ENCODE measurements at regions of chr9 and their contacts with region 1.

Region 1: DNA sequence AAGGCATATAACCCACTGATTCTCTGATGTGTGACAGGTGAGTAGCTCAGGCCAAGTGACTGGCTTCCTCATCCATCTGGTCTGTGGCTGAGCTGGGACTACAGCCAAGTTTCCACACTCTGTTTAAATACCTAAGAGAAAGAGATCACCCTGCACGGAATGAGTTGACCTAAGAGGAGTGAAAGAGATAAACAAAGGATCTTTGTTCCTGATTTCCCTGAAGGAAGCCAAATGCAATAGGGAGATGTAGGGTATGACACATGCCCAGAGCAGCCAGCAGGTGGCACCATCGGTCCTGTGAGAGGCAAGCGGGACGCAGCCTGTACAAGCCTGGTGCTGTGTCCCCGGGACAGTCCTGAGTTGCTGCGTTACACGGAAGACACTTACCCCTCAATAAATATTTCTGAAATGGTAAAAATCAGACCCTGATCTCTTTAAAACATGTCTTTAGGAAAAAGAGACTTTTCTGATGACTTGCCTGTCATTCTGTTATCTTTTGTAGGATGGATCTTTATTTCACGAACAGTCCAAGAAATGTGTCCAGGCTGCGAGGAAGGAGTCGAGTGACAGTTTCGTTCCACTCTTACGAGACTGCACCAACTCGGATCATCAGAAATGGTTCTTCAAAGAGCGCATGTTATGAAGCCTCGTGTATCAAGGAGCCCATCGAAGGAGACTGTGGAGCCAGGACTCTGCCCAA is 41.1 kb downstream of the GALNT12 start:
- DNase-seq: peak; percentile 95
- ATAC-seq: peak; percentile 100

Region 2: GRCh38 chr9:98998441-98999151 is 150.0 kb after region 1 on chr9:
- intact Hi-C with region 1: loop called (anchors 2 kb)
- DNase-seq: peak; percentile 91
- ATAC-seq: peak; percentile 85

Region 3: DNA sequence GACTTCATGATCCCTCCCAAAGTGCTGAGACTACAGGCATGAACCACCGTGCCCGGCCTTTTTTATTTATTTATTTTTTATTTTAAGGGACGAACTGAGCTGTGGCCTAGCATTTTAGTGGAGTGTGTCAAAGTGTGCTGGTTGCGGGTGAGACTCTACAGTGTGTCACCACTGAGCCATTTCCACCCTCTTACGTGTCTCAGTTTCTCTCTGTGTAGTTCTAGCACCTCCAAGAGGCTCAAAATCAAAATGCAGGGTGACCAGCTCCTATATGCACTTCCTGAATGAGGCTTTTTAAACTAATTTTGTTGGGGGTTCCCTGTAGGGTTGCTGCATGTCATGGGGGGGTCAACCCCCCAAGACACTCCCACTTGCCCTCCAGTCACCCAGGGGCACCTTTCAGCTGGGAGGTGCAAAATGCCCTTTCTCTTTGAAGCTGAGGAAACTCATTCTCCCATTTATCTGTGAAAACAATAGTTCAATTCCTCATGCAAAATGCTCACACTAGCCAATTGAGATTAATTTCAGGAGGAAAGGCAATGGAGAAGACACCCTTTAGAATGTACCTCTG is 164.4 kb after region 1 on chr9:
- intact Hi-C with region 1: loop called (anchors 5 kb)
- DNase-seq: no peak
- ATAC-seq: peak; percentile 87

Region 4: GRCh38 chr9:99140685-99141314 is 292.2 kb after region 1 on chr9:
- intact Hi-C with region 1: loop called (anchors 5 kb)
- DNase-seq: no peak
- ATAC-seq: peak; percentile 90